ENCODE measurements at regions of chr4 and their contacts with region 1.

Region 1: DNA sequence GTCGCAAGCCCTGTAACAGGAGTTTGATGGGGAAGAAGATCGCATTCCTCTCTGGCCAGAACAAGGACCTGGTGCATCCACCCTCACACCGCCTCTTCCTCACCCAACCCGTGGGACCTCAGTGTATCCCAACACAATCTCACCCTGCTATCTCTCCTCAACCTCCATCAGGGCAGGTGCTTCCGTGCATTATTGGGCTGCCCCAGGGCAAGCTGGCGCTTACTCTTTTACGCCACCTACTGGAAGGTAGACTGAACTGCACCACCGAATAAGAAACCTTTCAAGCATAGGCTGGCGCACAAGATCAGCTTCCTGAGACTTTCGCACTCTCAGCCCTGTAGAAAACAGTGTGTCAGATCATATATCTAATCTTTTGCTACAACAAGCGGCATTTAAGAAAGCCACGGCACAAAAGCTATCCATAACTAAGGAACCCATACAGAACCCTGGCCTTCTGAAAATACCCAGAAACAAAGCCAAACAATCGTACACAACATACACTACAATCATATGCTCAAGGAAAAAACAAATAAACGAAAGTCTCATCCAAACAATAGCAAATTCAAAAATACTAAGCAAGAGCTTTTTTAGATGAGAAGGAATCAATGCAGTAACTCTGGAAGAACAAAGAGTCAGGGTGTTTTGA is 209.3 kb downstream of the UGT8 start:
- DNase-seq: peak; percentile 53
- ATAC-seq: peak; percentile 98
- H3K4me3 Mint-ChIP-seq: peak overlapping the region; percentile 32; the same call in 1 of the 2 replicates
- H3K27ac Mint-ChIP-seq: 0 out of 2 replicates have a peak overlapping the region, but pooled peaks have one; percentile 2
- H3K4me1 Mint-ChIP-seq: peaks cover 3% of the 10 kb centered on the region
- H3K27me3 Mint-ChIP-seq: no peaks in the 10 kb centered on the region
- CTCF ChIP-seq: peak; percentile 92

Region 2: DNA sequence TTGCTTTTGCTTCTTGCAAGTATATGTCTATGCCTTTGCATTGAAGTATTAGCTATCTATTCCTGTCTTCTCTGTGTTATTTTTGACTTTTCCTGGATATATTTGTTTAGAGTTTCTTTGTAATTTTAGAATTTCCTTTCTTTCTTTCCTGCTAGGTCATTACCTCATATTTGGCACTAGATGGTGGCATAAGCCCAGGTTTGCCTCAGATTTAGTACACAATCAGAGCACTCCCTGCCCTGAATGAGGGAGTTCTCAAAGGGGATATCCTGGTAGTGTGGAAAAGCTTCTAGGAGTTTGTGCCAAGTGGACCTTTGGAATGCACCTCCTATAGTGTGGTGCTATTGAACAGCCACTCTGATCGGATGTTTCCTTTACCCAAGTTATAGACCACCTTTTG is 27.7 kb before region 1 on chr4:
- CTCF ChIA-PET with region 1: interaction called, 13 read pairs
- POLR2A ChIA-PET with region 1: no interaction called
- DNase-seq: no peak
- ATAC-seq: peak; percentile 86
- H3K4me3 Mint-ChIP-seq: no peak overlapping the region
- H3K27ac Mint-ChIP-seq: no peak overlapping the region
- H3K4me1 Mint-ChIP-seq: peaks cover 32% of the 10 kb centered on the region
- H3K27me3 Mint-ChIP-seq: no peaks in the 10 kb centered on the region
- CTCF ChIP-seq: peak; percentile 25; the same call in 1 of the 2 replicates

Region 3: GRCh38 chr4:114791976-114792375 is 15.9 kb before region 1 on chr4:
- CTCF ChIA-PET with region 1: interaction called, 14 read pairs
- POLR2A ChIA-PET with region 1: no interaction called
- DNase-seq: no peak
- ATAC-seq: no peak
- H3K4me3 Mint-ChIP-seq: no peak overlapping the region
- H3K27ac Mint-ChIP-seq: no peak overlapping the region; the same call in 1 of the 2 replicates
- H3K4me1 Mint-ChIP-seq: peaks cover 16% of the 10 kb centered on the region
- H3K27me3 Mint-ChIP-seq: no peaks in the 10 kb centered on the region
- CTCF ChIP-seq: no peak

Region 4: DNA sequence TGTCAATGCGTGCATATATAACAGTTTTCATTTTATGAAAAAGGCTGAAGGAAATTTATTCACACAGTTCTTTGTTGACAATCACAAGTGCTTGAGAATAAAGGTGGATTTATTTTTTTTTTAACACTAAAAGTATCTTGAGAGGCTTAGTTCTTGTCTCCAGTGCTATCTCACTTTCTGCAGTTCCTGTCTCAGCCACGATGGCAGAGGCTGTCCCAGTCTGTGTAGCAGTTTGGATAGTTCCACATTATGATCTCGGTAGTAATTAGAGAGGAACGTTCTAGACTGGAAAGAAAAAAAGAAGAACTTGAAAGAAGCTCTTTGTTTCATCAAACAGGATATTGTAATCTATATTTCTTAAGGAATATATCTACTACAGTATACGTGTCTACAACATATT is 19.8 kb after region 1 on chr4:
- CTCF ChIA-PET with region 1: no interaction called
- POLR2A ChIA-PET with region 1: no interaction called
- DNase-seq: no peak
- ATAC-seq: peak; percentile 47; the same call in 1 of the 2 replicates
- H3K4me3 Mint-ChIP-seq: no peak overlapping the region
- H3K27ac Mint-ChIP-seq: no peak overlapping the region
- H3K4me1 Mint-ChIP-seq: no peaks in the 10 kb centered on the region
- H3K27me3 Mint-ChIP-seq: no peaks in the 10 kb centered on the region
- CTCF ChIP-seq: no peak

Region 5: DNA sequence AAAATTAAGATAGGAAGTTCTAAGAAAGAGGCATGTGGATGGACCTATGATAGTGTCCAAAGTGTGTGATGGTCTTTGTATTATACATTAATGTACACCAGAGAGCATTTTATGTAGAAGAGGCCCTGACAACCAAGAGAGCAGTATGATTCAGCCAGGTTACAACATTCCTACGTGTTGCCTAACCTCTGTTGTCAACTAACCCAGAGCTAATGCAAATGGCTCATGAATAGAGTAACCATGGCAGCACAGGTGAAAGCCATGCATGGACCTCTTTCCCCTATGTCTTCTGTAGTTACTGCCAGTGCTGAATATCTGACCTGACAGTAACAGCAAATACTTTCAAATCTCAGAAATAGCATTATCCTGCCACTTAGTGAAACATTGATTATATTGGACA is 49.9 kb after region 1 on chr4:
- CTCF ChIA-PET with region 1: no interaction called
- POLR2A ChIA-PET with region 1: no interaction called
- DNase-seq: no peak
- ATAC-seq: peak; percentile 55; the same call in 1 of the 2 replicates
- H3K4me3 Mint-ChIP-seq: no peak overlapping the region
- H3K27ac Mint-ChIP-seq: no peak overlapping the region
- H3K4me1 Mint-ChIP-seq: no peaks in the 10 kb centered on the region
- H3K27me3 Mint-ChIP-seq: no peaks in the 10 kb centered on the region
- CTCF ChIP-seq: no peak

Region 6: GRCh38 chr4:115076691-115077090 is 268.8 kb after region 1 on chr4:
- CTCF ChIA-PET with region 1: no interaction called
- POLR2A ChIA-PET with region 1: no interaction called
- DNase-seq: no peak
- ATAC-seq: no peak
- H3K4me3 Mint-ChIP-seq: no peak overlapping the region
- H3K27ac Mint-ChIP-seq: no peak overlapping the region
- H3K4me1 Mint-ChIP-seq: no peaks in the 10 kb centered on the region
- H3K27me3 Mint-ChIP-seq: no peaks in the 10 kb centered on the region
- CTCF ChIP-seq: no peak

Region 7: DNA sequence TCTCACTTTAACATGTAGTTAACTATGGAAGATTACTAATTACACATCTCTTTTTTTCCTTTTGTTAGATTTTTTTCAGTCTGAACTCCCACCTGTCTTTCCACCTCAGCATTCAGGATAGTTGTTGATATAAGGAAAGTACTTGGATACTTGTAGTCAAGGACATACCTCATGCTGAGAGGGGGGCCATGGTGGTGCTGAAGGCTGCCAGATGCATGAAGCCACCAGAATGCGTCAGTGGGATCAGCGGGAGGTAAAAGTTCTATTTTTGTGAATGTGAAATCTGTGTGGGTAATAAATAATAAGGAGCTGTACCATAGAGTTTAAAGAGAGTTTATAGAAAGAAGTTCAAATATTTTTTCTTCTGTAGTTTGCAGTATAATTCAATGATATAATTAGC is 318.6 kb after region 1 on chr4:
- CTCF ChIA-PET with region 1: no interaction called
- POLR2A ChIA-PET with region 1: no interaction called
- DNase-seq: peak; percentile 15
- ATAC-seq: 0 out of 2 replicates have a peak, but pooled peaks have one; percentile 24
- H3K4me3 Mint-ChIP-seq: no peak overlapping the region
- H3K27ac Mint-ChIP-seq: no peak overlapping the region
- H3K4me1 Mint-ChIP-seq: peaks cover 5% of the 10 kb centered on the region
- H3K27me3 Mint-ChIP-seq: no peaks in the 10 kb centered on the region
- CTCF ChIP-seq: no peak